Motor neuron (in vitro differentiated cells): ENCODE measurements at regions of chr12 and their contacts with region 1.

Region 1: GRCh38 chr12:47779301-47779942 is 6.4 kb downstream of the SLC48A1 start:
- ATAC-seq: peak; percentile 66 to 92 (median 92)
- H3K4me3 ChIP-seq: no peak overlapping the region
- H3K27ac ChIP-seq: no peak overlapping the region
- H3K4me1 ChIP-seq: peaks cover 0 to 5% of the 10 kb centered on the region in 2 donors

Region 2: GRCh38 chr12:47715393-47715876 is 64.0 kb before region 1 on chr12:
- in situ Hi-C with region 1: loop called in 2 of 9 experiments (anchors 10 kb)
- ATAC-seq: peak; percentile 14 to 85 (median 79)
- H3K4me3 ChIP-seq: no peak overlapping the region
- H3K27ac ChIP-seq: no peak overlapping the region
- H3K4me1 ChIP-seq: no peaks in the 10 kb centered on the region